Endothelial cell of umbilical vein (primary cell): ENCODE measurements at regions of chr18 and their contacts with region 1.

Region 1: GRCh38 chr18:5546660-5547059 is 2.9 kb upstream of the EPB41L3 start:
- DNase-seq: peak; percentile 76
- H3K4me3 ChIP-seq: no peak overlapping the region
- H3K27ac ChIP-seq: no peak overlapping the region
- H3K4me1 ChIP-seq: peaks cover 16% of the 10 kb centered on the region
- H3K27me3 ChIP-seq: no peaks in the 10 kb centered on the region
- CTCF ChIP-seq: peak; percentile 59 to 68
- POLR2A ChIP-seq: no peak

Region 2: GRCh38 chr18:5073026-5073944 is 473.4 kb before region 1 on chr18:
- CTCF ChIA-PET with region 1: interaction called, 3 read pairs
- POLR2A ChIA-PET with region 1: no interaction called
- dilution Hi-C with region 1: no loop called
- intact Hi-C with region 1: loop called (anchors 10 kb)
- DNase-seq: peak; percentile 49
- H3K4me3 ChIP-seq: no peak overlapping the region
- H3K27ac ChIP-seq: no peak overlapping the region
- H3K4me1 ChIP-seq: no peaks in the 10 kb centered on the region
- H3K27me3 ChIP-seq: no peaks in the 10 kb centered on the region
- CTCF ChIP-seq: peak; percentile 11 to 40
- POLR2A ChIP-seq: no peak

Region 3: GRCh38 chr18:5424903-5425664 is 121.6 kb before region 1 on chr18:
- CTCF ChIA-PET with region 1: interaction called, 54 read pairs
- POLR2A ChIA-PET with region 1: no interaction called
- dilution Hi-C with region 1: no loop called
- intact Hi-C with region 1: loop called (anchors 1 kb)
- DNase-seq: peak; percentile 67
- H3K4me3 ChIP-seq: no peak overlapping the region
- H3K27ac ChIP-seq: no peak overlapping the region
- H3K4me1 ChIP-seq: no peaks in the 10 kb centered on the region
- H3K27me3 ChIP-seq: no peaks in the 10 kb centered on the region
- CTCF ChIP-seq: peak; percentile 22 to 53
- POLR2A ChIP-seq: no peak

Region 4: GRCh38 chr18:5456577-5457463 is 89.8 kb before region 1 on chr18:
- CTCF ChIA-PET with region 1: interaction called, 177 read pairs
- POLR2A ChIA-PET with region 1: no interaction called
- dilution Hi-C with region 1: no loop called
- intact Hi-C with region 1: loop called (anchors 1 kb)
- DNase-seq: peak; percentile 79
- H3K4me3 ChIP-seq: peak overlapping the region in 1 of 3 experiments; percentile 46
- H3K27ac ChIP-seq: peak overlapping the region; percentile 98
- H3K4me1 ChIP-seq: peaks cover 54% of the 10 kb centered on the region
- H3K27me3 ChIP-seq: no peaks in the 10 kb centered on the region
- CTCF ChIP-seq: peak; percentile 29 to 37
- POLR2A ChIP-seq: no peak

Region 5: DNA sequence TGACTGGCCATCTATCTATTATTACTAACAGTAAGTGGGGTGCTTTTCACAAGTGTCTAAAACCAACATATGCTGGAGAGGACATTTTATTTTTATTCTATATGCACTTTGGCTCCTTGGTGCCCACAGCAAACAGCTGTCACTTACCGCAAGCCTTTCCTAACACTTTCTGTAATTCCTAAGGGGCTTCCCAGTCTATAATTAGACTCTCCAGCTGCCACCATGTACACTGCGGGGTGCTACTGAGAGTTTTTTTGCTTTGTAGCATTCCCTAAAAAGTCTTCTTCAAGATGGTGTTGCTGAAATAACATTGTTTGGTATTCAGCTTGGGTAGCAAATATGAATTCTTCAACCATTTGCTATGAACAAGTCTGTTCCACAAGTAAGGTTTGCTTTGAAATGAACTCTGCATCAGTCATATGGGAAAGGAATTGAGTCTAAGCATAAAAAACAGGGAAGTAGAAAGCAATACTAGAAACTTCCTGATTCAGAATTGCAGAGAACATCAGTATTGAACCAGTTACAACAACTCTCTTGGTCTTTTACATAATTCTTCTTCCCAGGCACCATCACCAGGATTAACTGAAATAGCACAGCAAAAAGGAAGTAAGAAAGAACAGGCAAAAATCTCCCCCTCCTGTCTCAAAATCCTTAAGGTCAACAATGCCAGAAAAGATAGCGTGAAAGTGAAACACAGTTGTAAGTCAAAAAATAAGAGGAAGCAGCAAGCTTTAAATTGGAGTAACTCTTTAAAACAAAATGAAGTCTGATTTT is 31.5 kb before region 1 on chr18:
- CTCF ChIA-PET with region 1: interaction called, 24 read pairs
- POLR2A ChIA-PET with region 1: no interaction called
- dilution Hi-C with region 1: no loop called
- intact Hi-C with region 1: loop called (anchors 1 kb)
- DNase-seq: no peak
- H3K4me3 ChIP-seq: no peak overlapping the region
- H3K27ac ChIP-seq: no peak overlapping the region
- H3K4me1 ChIP-seq: peaks cover 49% of the 10 kb centered on the region
- H3K27me3 ChIP-seq: no peaks in the 10 kb centered on the region
- CTCF ChIP-seq: no peak
- POLR2A ChIP-seq: no peak

Region 6: GRCh38 chr18:5582849-5583681 is 36.4 kb after region 1 on chr18:
- CTCF ChIA-PET with region 1: interaction called, 9 read pairs
- POLR2A ChIA-PET with region 1: no interaction called
- dilution Hi-C with region 1: no loop called
- intact Hi-C with region 1: loop called (anchors 2 kb)
- DNase-seq: peak; percentile 90
- H3K4me3 ChIP-seq: no peak overlapping the region
- H3K27ac ChIP-seq: peak overlapping the region; percentile 79
- H3K4me1 ChIP-seq: peaks cover 31% of the 10 kb centered on the region
- H3K27me3 ChIP-seq: no peaks in the 10 kb centered on the region
- CTCF ChIP-seq: no peak
- POLR2A ChIP-seq: no peak

Region 7: DNA sequence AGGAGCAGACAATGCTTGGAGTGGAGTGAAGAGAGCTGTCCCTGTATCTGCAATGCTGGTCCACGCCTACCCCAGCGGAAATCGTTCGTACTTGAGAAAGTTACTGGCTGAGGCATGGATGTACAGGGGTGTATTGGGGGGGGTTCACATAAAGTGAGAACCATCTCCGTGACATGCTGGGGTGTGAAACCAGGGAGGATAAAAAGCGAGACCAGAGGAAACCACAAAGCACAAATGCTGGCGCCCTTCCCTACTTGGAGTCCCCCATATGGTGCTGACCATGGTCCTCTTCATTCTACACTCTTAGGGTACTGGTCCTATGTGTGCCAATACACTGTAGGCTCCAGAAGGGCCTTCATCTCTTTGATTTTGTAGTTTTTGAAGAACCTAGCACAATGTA is 623.9 kb after region 1 on chr18:
- CTCF ChIA-PET with region 1: no interaction called
- POLR2A ChIA-PET with region 1: no interaction called
- dilution Hi-C with region 1: no loop called
- intact Hi-C with region 1: no loop called
- DNase-seq: no peak
- H3K4me3 ChIP-seq: no peak overlapping the region
- H3K27ac ChIP-seq: no peak overlapping the region
- H3K4me1 ChIP-seq: no peaks in the 10 kb centered on the region
- H3K27me3 ChIP-seq: no peaks in the 10 kb centered on the region
- CTCF ChIP-seq: no peak
- POLR2A ChIP-seq: no peak